Activated B cell treated with CpG ODN at 0.5 μM for 24 hours (primary cell): ENCODE measurements at regions of chr5 and their contacts with region 1.

Region 1: DNA sequence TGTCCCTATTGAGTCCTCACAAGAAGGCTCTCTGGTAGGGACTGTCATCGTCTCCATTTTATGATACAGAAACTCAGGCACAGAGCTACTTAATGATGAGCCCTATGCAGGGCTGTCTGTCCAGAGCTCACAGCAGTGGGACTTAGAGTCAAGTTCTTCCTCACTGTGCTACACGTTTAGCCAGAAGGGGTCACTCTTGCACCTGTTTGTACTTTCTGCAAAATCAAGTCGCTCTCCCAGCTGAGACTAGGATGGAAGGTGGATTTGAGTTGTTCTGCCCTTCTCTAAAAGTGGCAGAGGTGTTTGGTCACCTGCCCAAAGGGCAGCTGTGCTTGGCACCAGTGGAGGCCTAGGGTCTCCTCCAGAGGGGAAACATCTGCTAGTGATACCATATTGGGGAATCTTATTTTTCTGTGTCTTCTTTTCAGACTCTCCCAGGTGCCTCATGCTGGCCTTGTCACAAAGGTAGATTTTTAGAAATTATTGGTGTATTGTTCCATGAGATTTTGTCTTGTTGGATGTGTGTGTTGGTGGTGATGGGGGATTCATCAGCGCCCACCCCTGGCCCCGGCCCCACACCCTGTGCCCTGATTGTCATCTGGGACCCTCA is 104.2 kb downstream of the PPARGC1B start:
- DNase-seq: no peak
- ATAC-seq: peak; percentile 26
- H3K4me3 Mint-ChIP-seq: no peak overlapping the region
- H3K27ac Mint-ChIP-seq: no peak overlapping the region
- H3K4me1 Mint-ChIP-seq: peaks cover 8% of the 10 kb centered on the region
- H3K27me3 Mint-ChIP-seq: no peaks in the 10 kb centered on the region
- CTCF ChIP-seq: no peak

Region 2: GRCh38 chr5:149485655-149486425 is 348.5 kb before region 1 on chr5:
- CTCF ChIA-PET with region 1: no interaction called
- POLR2A ChIA-PET with region 1: no interaction called
- intact Hi-C with region 1: no loop called
- DNase-seq: no peak
- ATAC-seq: no peak
- H3K4me3 Mint-ChIP-seq: no peak overlapping the region
- H3K27ac Mint-ChIP-seq: no peak overlapping the region
- H3K4me1 Mint-ChIP-seq: peaks cover 2% of the 10 kb centered on the region
- H3K27me3 Mint-ChIP-seq: peaks cover 6% of the 10 kb centered on the region
- CTCF ChIP-seq: no peak

Region 3: DNA sequence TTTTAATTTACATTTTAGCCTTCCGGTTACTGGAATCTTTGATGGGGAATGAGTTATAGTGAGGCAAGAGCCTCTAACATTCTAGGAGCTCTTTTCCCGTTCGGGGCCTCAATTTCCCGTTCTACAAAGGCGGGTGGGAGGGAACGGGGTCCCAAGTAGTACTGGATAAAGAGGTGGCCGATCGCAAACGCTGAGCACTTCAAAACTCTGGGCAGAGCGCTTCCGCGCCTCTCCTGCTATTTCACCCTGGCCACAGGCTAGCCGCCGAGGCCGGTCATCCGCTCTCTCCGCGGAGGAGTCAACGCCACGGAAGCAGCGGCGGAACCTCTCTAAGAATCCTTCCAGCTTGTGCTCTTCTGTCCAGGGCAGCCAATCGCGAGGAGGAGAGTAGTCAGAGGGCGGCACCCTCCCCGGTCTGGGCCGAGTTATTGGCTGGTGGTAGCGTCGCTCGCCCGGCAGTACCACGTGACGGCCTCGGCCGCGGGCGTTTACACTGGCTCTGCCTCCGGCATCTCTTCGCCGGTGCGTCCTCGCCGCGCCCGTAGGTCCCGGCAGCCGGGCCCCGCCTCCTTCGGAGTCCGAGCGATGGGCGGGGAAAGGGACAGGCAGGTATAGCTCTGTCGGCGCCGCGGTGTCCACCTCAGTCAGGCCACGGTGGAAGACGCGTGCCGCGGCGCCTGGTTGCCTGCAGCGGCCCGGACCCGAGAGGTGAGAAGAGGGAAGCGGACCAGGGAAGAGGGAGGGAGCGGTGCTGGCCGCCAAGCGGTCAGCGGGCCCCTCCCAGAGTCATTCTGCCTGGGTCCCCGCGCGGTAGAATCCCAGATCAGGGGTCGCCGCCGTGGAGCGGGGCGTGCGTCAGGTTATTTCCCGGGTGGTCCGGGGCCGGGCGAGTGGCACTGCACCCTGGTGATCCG is 126.2 kb after region 1 on chr5 and contains the start of gene SLC26A2:
- CTCF ChIA-PET with region 1: interaction called, 7 read pairs
- POLR2A ChIA-PET with region 1: interaction called, 7 read pairs
- intact Hi-C with region 1: loop called (anchors 1 kb)
- DNase-seq: peak; percentile 88
- ATAC-seq: peak; percentile 97
- H3K4me3 Mint-ChIP-seq: peak within 1 kb of the TSS; percentile 98
- H3K27ac Mint-ChIP-seq: peak within 1 kb of the TSS; percentile 98
- H3K4me1 Mint-ChIP-seq: peaks cover 20% of the 10 kb centered on the region
- H3K27me3 Mint-ChIP-seq: no peaks in the 10 kb centered on the region
- CTCF ChIP-seq: no peak
- total RNA-seq, gene SLC26A2: 8.9 and 11.0 TPM in 2 replicates

Region 4: GRCh38 chr5:150129813-150130492 is 295.6 kb after region 1 on chr5:
- CTCF ChIA-PET with region 1: no interaction called
- POLR2A ChIA-PET with region 1: no interaction called
- intact Hi-C with region 1: loop called (anchors 10 kb)
- DNase-seq: peak; percentile 29
- ATAC-seq: peak; percentile 84
- H3K4me3 Mint-ChIP-seq: no peak overlapping the region
- H3K27ac Mint-ChIP-seq: no peak overlapping the region
- H3K4me1 Mint-ChIP-seq: no peaks in the 10 kb centered on the region
- H3K27me3 Mint-ChIP-seq: no peaks in the 10 kb centered on the region
- CTCF ChIP-seq: peak; percentile 50

Region 5: DNA sequence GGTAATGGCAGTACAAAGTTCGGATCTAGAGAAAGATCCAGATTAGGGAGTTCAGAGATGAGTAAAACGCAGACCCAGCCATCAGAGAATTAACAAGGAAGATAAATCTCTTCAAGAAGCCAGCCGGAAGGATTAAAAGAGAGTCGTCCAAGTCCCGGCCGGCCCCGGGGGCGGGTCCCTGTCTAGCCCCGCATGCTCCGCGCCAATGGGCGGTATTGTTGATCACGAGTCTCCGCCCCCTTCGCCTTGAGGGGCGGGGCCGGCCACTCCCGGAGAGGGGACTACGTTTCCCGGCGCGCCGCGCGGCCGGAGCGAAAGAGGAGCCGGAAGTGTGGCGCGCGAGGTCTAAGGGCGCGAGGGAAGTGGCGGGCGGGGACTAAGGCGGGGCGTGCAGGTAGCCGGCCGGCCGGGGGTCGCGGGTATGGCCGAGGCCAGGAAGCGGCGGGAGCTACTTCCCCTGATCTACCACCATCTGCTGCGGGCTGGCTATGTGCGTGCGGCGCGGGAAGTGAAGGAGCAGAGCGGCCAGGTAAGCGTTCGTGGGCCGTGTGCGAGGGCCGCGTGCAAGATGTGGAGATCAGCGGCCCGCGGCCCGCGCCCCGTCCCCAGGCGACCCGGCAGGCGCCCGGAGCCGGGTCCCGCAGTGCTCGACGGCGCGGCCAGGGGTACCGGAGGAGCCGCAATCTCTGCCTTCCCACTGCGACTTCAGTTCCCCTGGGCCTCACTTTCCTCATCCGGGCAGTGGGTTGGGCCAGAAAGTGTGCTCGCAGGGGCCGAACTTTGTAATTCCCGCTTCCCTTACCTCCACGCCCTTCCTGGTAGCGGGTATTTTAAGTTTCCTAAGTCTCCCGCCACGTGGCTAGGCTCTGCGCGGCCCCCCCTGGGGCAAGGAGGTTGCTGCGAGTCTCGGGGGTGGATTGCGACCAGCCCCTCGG is 523.2 kb after region 1 on chr5 and contains the start of gene TCOF1:
- CTCF ChIA-PET with region 1: no interaction called
- POLR2A ChIA-PET with region 1: no interaction called
- intact Hi-C with region 1: loop called (anchors 10 kb)
- DNase-seq: peak; percentile 98
- ATAC-seq: peak; percentile 97
- H3K4me3 Mint-ChIP-seq: peak within 1 kb of the TSS; percentile 89
- H3K27ac Mint-ChIP-seq: peak within 1 kb of the TSS; percentile 93
- H3K4me1 Mint-ChIP-seq: peaks cover 49% of the 10 kb centered on the region
- H3K27me3 Mint-ChIP-seq: no peaks in the 10 kb centered on the region
- CTCF ChIP-seq: no peak
- total RNA-seq, gene TCOF1: 74.7 and 76.1 TPM in 2 replicates